HEK293T (cell line): ENCODE measurements at regions of chr1 and their contacts with region 1.

Region 1: GRCh38 chr1:89820422-89821321 is at the start of gene LRRC8D:
- DNase-seq: peak; percentile 92

Region 2: GRCh38 chr1:89708751-89709375 is 111.8 kb before region 1 on chr1:
- CTCF ChIA-PET with region 1: no interaction called
- POLR2A ChIA-PET with region 1: no interaction called
- DNase-seq: peak; percentile 36

Region 3: GRCh38 chr1:89833183-89834082 is 12.8 kb after region 1 on chr1:
- CTCF ChIA-PET with region 1: no interaction called
- POLR2A ChIA-PET with region 1: interaction called, 17 read pairs
- DNase-seq: no peak